ENCODE measurements at regions of chr4 and their contacts with region 1.

Region 1: GRCh38 chr4:167021545-167022155 is 212.6 kb downstream of the SPOCK3 start:
- DNase-seq: peak; percentile 56
- H3K4me3 ChIP-seq: no peak overlapping the region
- H3K27ac ChIP-seq: no peak overlapping the region
- H3K4me1 ChIP-seq: no peaks in the 10 kb centered on the region
- H3K27me3 ChIP-seq: no peaks in the 10 kb centered on the region
- CTCF ChIP-seq: peak; percentile 53 to 79 (median 78)
- EP300 ChIP-seq: no peak
- POLR2A ChIP-seq: no peak

Region 2: DNA sequence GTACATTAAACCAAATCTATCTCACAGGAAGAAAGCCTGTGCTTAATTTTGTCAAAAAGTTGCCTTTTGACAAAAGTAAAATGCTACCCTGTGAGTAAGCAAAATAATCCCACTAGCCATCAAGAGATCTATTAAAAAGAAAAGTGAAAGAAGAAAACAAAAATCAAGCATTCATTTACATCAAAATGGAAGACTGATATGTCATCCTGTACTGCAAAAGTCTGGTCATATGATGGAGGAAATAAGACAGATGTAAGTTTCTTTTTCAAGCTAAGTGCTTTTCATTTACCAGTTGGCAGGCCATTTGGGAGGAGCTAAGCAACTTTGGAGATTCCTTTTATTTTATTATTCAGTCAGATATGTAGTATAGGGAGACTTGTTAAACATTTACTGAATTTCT is 174.7 kb before region 1 on chr4:
- in situ Hi-C with region 1: no loop called
- intact Hi-C with region 1: no loop called
- DNase-seq: no peak
- H3K4me3 ChIP-seq: no peak overlapping the region
- H3K27ac ChIP-seq: no peak overlapping the region
- H3K4me1 ChIP-seq: no peaks in the 10 kb centered on the region
- H3K27me3 ChIP-seq: no peaks in the 10 kb centered on the region
- CTCF ChIP-seq: no peak
- EP300 ChIP-seq: no peak
- POLR2A ChIP-seq: no peak

Region 3: DNA sequence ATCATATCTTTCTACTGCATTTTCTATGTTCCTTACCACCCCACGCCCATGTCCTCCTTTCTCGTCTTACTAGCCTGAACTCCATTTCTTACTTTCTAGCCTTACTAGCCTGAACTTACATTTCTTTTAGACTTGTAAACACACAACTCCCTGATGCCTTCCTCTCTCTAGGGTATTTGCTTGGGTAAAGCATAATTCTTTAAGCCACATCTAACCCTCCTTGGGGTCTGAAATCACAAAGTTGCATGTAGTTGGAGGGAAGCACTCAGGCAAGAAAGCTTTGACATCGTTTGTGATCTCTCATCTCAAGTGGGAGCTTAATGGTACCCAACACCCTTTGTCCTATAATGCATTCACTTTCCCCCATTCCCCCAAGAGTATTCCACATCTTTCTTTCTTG is 88.2 kb after region 1 on chr4:
- in situ Hi-C with region 1: no loop called
- intact Hi-C with region 1: no loop called
- DNase-seq: no peak
- H3K4me3 ChIP-seq: no peak overlapping the region
- H3K27ac ChIP-seq: no peak overlapping the region
- H3K4me1 ChIP-seq: no peaks in the 10 kb centered on the region
- H3K27me3 ChIP-seq: no peaks in the 10 kb centered on the region
- CTCF ChIP-seq: no peak
- EP300 ChIP-seq: no peak
- POLR2A ChIP-seq: no peak

Region 4: GRCh38 chr4:167290678-167291077 is 269.0 kb after region 1 on chr4:
- in situ Hi-C with region 1: loop called in 1 of 4 experiments (anchors 25 kb)
- intact Hi-C with region 1: no loop called
- DNase-seq: no peak
- H3K4me3 ChIP-seq: no peak overlapping the region
- H3K27ac ChIP-seq: no peak overlapping the region
- H3K4me1 ChIP-seq: no peaks in the 10 kb centered on the region
- H3K27me3 ChIP-seq: no peaks in the 10 kb centered on the region
- CTCF ChIP-seq: no peak
- EP300 ChIP-seq: no peak
- POLR2A ChIP-seq: no peak

Region 5: DNA sequence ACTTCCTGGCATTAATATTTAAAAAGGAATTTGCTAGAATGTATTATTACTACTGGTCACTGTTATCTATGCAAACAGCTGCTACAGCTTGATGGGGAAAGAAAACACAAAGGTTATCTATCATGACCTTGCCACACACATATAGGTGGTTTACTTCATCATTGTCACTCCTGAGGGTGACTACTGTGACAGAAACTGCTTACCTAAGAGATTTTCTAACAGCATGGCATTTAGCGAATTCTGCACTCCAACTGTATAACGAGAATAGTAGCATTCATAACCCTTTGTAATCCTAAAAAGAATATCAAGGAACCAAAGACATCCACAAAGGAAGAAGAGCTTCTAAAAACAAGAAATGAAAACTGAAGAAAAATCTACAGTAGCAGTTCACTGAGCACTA is 287.2 kb after region 1 on chr4:
- in situ Hi-C with region 1: no loop called
- intact Hi-C with region 1: no loop called
- DNase-seq: no peak
- H3K4me3 ChIP-seq: no peak overlapping the region
- H3K27ac ChIP-seq: no peak overlapping the region
- H3K4me1 ChIP-seq: no peaks in the 10 kb centered on the region
- H3K27me3 ChIP-seq: no peaks in the 10 kb centered on the region
- CTCF ChIP-seq: no peak
- EP300 ChIP-seq: no peak
- POLR2A ChIP-seq: no peak

Region 6: DNA sequence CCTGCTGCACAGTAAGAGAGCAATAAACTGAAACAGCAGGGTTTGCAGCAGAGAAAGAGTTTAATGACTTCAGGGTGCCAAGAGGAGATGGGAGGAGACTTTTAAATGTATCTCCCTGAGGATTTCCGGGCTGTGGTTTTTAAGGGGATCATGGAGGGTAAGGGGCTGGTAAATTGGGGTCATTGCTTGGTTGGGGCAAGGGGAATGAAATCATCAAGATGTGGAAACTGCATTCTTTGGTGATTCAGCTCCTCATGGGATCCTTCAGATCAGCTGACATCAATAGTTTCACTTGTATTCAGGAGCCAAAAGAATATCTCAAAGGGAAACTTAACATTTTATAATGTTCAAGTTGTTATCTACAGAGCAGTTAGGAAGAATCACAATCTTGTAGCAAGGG is 896.4 kb after region 1 on chr4:
- in situ Hi-C with region 1: no loop called
- intact Hi-C with region 1: no loop called
- DNase-seq: no peak
- H3K4me3 ChIP-seq: no peak overlapping the region
- H3K27ac ChIP-seq: no peak overlapping the region
- H3K4me1 ChIP-seq: no peaks in the 10 kb centered on the region
- H3K27me3 ChIP-seq: no peaks in the 10 kb centered on the region
- CTCF ChIP-seq: no peak
- EP300 ChIP-seq: no peak
- POLR2A ChIP-seq: no peak

Region 7: DNA sequence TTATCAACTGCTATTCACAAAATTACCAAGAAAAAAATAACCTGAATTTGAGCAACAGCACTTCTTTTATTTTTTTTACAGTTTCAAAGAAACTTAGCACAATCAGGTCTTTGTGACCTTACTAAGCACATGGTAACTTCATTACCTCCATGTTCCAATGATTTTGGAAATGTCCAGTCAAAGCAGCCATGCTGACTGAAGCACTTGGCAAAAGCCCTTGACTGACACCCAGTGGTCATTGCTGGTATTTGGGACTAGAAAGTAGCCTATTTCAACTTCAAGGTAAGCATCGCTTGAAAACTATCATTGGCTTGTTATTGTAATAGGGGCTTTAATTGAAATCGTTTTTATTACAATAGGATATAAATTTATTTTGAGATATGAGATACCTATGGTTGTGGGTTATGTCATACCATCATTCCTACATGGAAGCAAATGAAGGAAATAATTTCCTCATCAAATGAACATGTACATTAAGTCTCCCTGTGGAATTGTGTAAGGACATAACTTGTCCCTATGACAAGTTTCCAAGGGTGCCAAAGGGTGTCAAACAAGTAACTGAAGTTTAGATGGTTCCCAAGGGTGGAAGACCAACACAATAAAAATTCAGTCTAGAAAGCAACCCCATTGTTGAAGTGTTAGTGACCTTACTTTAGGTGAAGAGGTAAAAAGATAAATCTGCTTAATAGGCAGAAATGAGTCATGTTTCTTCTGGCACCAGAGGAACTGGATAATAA is 1055.5 kb after region 1 on chr4:
- in situ Hi-C with region 1: no loop called
- intact Hi-C with region 1: loop called (anchors 10 kb)
- DNase-seq: peak; percentile 32
- H3K4me3 ChIP-seq: no peak overlapping the region
- H3K27ac ChIP-seq: no peak overlapping the region
- H3K4me1 ChIP-seq: no peaks in the 10 kb centered on the region
- H3K27me3 ChIP-seq: no peaks in the 10 kb centered on the region
- CTCF ChIP-seq: peak; percentile 45 to 73 (median 67)
- EP300 ChIP-seq: no peak
- POLR2A ChIP-seq: no peak

Region 8: GRCh38 chr4:168153596-168154440 is 1132.2 kb after region 1 on chr4:
- in situ Hi-C with region 1: loop called in 1 of 4 experiments (anchors 25 kb)
- intact Hi-C with region 1: no loop called
- DNase-seq: peak; percentile 77
- H3K4me3 ChIP-seq: peak overlapping the region in 1 of 4 donors; percentile 23
- H3K27ac ChIP-seq: no peak overlapping the region
- H3K4me1 ChIP-seq: no peaks in the 10 kb centered on the region
- H3K27me3 ChIP-seq: no peaks in the 10 kb centered on the region
- CTCF ChIP-seq: peak; percentile 46 to 54 (median 48)
- EP300 ChIP-seq: no peak
- POLR2A ChIP-seq: no peak